ENCODE measurements at regions of chr17 and their contacts with region 1.

Region 1: DNA sequence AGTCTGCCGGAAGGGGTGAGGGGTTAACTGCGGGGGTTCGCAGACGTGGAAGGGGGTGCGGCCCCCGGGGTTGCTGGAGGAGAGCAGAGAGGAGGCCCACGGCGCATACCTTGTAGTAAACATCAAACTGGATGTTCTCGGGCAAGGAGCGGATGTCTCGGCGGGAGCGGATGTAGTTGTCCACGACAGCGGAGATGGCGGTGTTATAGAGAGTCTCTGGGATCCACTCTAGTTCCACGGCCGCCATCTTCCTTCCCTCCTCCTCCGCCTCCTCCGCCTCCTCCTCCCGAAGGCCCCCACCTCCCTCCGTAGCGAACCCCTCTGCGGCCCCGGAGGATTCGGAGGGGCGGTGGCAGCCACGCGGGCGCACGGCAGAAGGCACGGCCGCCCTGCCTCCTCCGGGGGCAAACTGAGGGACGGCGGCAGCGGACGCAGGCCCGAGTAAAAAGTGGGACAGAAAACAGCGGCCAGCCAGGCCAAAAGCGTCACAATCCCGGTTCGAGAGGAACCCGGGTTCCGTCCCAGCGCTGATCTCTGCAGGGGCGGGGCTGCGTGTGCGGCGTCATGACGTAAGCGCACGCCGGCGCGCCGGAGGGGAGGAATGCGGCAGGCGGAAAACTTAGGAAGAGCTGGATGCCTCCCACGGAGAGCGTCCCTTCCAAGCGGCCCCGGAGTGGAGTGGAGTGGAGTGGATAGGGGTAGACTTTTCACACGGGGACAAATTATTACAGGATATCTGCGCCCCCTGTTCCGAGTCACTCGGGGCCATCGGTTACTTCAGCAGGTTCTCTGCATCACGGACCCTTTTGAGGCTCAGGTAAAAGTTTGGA is at the start of gene APPBP2:
- DNase-seq: peak; percentile 59 to 80 (median 77)
- ATAC-seq: peak; percentile 92
- H3K4me3 ChIP-seq: peak within 1 kb of the TSS; percentile 86
- H3K4me3 Mint-ChIP-seq: peak within 1 kb of the TSS; percentile 98 to 100 (median 99)
- H3K27ac ChIP-seq: peak within 1 kb of the TSS; percentile 99
- H3K27ac Mint-ChIP-seq: peak within 1 kb of the TSS; percentile 96 to 99 (median 98)
- H3K4me1 ChIP-seq: peaks cover 19 to 25% of the 10 kb centered on the region in 2 donors
- H3K4me1 Mint-ChIP-seq: peaks cover 31 to 63% (median 55%) of the 10 kb centered on the region in 7 donors
- H3K27me3 ChIP-seq: no peaks in the 10 kb centered on the region
- H3K27me3 Mint-ChIP-seq: no peaks in the 10 kb centered on the region
- total RNA-seq, gene APPBP2: 24.2 to 47.5 (median 33.0) TPM

Region 2: DNA sequence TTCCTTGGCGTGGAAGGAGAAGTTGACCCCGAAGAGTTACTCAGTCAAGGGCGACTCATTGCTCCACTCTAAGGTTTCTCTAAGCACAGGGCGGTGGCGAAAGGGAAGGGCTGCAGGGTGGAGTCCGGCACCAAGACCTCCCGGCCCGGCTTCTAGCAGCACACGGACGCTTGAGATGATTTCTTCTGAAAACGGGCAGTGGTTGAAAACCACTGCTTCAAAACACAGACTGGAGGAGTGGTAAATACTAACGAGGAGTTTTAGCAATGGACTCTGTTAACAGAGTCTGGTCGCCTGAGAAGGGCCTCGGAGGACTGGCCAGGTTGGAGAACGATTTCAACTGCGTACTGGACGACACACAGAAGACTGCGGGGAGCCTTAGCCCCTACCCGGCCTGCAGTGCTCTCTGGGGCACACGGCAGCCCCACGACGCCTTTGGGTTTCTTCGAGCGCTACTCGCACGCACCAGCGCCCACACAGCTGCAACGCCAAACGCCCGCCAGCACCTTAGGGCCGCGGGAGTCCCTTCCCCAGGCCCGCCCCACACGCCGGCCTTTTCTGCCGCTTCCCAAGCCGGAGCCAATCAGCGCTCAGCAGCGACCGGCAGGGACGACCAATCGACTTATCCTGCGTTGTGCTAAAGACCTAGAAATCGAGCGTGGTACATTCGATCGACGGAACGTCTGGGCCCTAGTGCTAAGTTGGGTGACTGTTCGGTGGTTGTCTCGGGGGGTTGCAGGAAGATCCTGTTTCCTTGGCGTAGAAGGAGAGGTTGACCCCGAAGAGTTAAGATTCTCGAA is 390.5 kb before region 1 on chr17:
- CTCF ChIA-PET with region 1: no interaction called
- POLR2A ChIA-PET with region 1: no interaction called
- intact Hi-C with region 1: loop called in 1 of 2 experiments (anchors 10 kb)
- DNase-seq: peak; percentile 52 to 85 (median 67)
- ATAC-seq: peak; percentile 93
- H3K4me3 ChIP-seq: peak overlapping the region; percentile 71
- H3K4me3 Mint-ChIP-seq: peak overlapping the region; percentile 90 to 98 (median 96)
- H3K27ac ChIP-seq: peak overlapping the region; percentile 47
- H3K27ac Mint-ChIP-seq: peak overlapping the region; percentile 12 to 93 (median 72)
- H3K4me1 ChIP-seq: peaks cover 3 to 12% of the 10 kb centered on the region in 2 donors
- H3K4me1 Mint-ChIP-seq: peaks cover 18 to 36% (median 34%) of the 10 kb centered on the region in 7 donors
- H3K27me3 ChIP-seq: peaks cover 3 to 12% of the 10 kb centered on the region in 2 donors
- H3K27me3 Mint-ChIP-seq: peaks cover 14 to 42% (median 29%) of the 10 kb centered on the region in 5 donors

Region 3: DNA sequence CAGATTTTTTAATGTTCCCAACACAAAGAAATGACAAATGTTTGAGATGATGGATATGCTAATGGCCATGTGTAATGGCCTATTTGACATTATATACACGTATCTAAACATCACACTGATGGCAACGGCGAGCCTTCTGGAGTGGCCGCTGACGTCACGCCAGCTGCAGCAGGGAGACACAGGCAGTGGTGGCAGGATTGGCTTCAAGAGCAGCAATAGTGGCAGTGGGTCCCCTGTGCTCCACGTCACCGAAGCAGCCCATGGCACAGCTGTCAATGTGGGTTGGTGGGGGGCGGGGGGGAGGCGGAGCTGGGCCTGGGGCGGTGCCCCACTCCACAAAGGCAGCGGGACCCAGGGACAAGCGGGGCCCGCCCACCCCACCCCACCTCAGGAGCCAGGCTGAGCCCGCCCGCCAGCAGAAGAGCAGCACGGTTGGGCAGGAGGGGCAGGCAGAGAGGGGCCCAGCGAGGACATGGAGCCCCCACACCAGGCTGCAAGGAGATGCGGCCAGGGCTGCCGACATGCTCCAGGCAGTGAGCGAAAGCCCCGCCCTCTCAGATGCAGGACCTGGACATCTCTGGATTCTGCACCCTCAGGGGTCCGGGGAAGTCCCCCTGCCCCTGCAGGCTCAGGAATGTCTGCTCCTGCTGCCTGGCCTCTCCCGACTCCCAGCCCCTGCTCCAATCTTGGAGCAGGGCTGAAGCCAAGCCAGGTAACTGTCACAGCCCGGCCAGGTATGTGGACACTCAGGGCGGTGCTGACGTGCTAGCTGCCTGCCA is 198.6 kb before region 1 on chr17:
- CTCF ChIA-PET with region 1: no interaction called
- POLR2A ChIA-PET with region 1: no interaction called
- intact Hi-C with region 1: no loop called
- DNase-seq: no peak
- ATAC-seq: no peak
- H3K4me3 ChIP-seq: no peak overlapping the region
- H3K4me3 Mint-ChIP-seq: no peak overlapping the region
- H3K27ac ChIP-seq: no peak overlapping the region
- H3K27ac Mint-ChIP-seq: peak overlapping the region in 1 of 9 donors; percentile 68
- H3K4me1 ChIP-seq: no peaks in the 10 kb centered on the region
- H3K4me1 Mint-ChIP-seq: peaks cover 2 to 24% (median 15%) of the 10 kb centered on the region in 7 donors
- H3K27me3 ChIP-seq: no peaks in the 10 kb centered on the region
- H3K27me3 Mint-ChIP-seq: no peaks in the 10 kb centered on the region